ENCODE measurements at regions of chr18 and their contacts with region 1.

Region 1: DNA sequence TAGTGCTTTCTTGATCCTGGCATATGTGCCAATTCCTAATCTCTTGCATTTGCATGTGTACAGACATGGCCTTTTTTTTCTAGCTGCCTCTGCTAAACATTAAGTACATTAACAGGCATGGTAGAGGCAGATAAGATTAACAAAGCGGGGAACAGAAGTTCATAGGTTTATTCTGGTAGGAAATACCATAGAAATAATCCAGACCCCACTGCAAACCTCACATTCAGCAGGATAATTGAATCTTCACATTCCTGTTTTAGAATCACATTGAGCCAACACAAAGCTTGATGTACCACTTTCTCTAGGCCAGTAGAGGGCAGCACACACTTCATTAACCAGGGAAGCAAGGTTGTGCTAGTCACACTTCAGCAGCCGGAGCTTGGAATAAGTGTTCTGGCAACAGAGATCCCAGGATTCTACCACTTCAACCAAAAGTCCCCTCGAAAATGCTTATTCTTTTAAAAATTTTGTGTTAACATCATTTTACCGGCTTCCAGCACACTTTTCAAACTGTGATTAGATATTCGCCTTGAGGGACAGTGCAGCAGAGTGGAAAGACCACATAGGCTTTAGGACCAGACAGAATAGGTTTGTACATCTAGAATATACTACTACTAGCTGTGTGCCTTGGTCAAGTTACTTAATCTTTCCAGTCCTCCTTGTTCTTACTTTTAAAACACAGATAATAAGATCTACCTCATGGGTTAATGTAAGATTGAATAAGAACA is 420.2 kb upstream of the CHST9 start:
- DNase-seq: no peak
- ATAC-seq: peak; percentile 90
- H3K4me3 ChIP-seq: no peak overlapping the region
- H3K27ac ChIP-seq: no peak overlapping the region
- H3K4me1 ChIP-seq: no peaks in the 10 kb centered on the region
- H3K27me3 ChIP-seq: no peaks in the 10 kb centered on the region
- CTCF ChIP-seq: peak; percentile 77 to 86 (median 83)
- EP300 ChIP-seq: no peak
- POLR2A ChIP-seq: no peak
- RAD21 ChIP-seq: peak; percentile 76

Region 2: DNA sequence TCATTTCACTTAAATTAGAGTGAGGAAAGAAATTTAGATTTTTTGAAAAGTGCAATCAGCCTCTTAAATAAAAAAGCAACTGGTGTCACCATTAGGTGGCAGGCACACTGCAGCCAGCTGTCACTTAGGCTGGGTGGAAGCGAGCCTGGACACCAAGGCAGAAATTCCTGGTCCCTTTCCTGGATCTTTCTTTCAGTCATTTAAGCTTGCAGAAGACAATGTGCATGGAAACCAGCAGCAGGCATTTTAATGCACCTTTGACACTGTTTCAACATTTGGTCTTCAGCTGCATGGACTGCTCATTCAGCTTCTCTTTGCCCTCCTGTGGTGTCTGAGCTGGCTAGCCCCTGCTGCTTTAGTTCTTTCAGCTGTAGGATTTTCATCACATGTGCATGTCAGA is 800.8 kb before region 1 on chr18:
- CTCF ChIA-PET with region 1: interaction called, 5 read pairs
- POLR2A ChIA-PET with region 1: no interaction called
- RAD21 ChIA-PET with region 1: no interaction called
- SMC1A ChIA-PET with region 1: no interaction called
- in situ Hi-C with region 1: loop called (anchors 10 kb)
- intact Hi-C with region 1: no loop called
- DNase-seq: no peak
- ATAC-seq: no peak
- H3K4me3 ChIP-seq: no peak overlapping the region
- H3K27ac ChIP-seq: no peak overlapping the region
- H3K4me1 ChIP-seq: no peaks in the 10 kb centered on the region
- H3K27me3 ChIP-seq: no peaks in the 10 kb centered on the region
- CTCF ChIP-seq: peak; percentile 21 to 41 (median 33); a peak in 4 of 6 replicates
- EP300 ChIP-seq: no peak
- POLR2A ChIP-seq: no peak
- RAD21 ChIP-seq: peak; percentile 55

Region 3: DNA sequence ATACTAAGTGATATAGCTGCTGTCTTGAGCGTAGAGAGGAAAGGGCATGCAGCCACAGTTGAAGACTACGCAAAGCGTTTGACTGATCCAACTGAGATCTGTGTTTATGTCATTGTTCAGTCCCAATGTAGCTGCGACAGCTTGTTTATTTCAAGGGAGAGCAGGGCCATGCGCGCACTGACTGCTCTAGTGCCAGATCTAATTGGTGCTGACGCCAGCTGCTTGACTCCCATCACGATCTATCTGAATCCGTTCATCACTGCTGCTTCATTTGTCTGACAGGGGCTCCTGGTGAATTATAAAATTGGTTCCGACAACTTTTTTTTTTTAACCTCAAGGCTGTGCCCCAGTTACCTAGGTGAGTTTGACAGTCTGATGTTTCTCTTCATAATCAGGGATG is 495.8 kb before region 1 on chr18:
- CTCF ChIA-PET with region 1: no interaction called
- POLR2A ChIA-PET with region 1: no interaction called
- RAD21 ChIA-PET with region 1: no interaction called
- SMC1A ChIA-PET with region 1: no interaction called
- in situ Hi-C with region 1: no loop called
- intact Hi-C with region 1: no loop called
- DNase-seq: no peak
- ATAC-seq: no peak
- H3K4me3 ChIP-seq: no peak overlapping the region
- H3K27ac ChIP-seq: no peak overlapping the region
- H3K4me1 ChIP-seq: no peaks in the 10 kb centered on the region
- H3K27me3 ChIP-seq: no peaks in the 10 kb centered on the region
- CTCF ChIP-seq: no peak
- EP300 ChIP-seq: no peak
- POLR2A ChIP-seq: no peak
- RAD21 ChIP-seq: no peak

Region 4: DNA sequence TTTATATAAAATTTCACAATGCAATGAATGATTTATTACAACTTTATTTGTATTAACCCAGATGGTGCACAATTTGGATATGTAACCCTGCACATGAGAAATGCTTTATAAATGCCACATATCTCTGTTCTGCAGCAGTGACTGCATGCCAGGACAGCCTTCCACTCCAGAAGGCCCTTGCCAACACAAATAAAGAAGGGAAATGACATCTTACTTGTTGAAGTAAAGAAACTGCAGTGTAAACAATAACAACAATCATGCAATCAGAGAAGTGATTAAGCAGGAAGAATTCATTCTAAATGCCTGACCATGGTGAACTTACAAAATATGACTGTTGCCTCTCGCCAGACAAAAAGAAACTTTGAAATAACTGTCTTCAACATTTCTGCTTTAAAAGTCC is 290.3 kb before region 1 on chr18:
- CTCF ChIA-PET with region 1: no interaction called
- POLR2A ChIA-PET with region 1: no interaction called
- RAD21 ChIA-PET with region 1: no interaction called
- SMC1A ChIA-PET with region 1: no interaction called
- in situ Hi-C with region 1: no loop called
- intact Hi-C with region 1: no loop called
- DNase-seq: no peak
- ATAC-seq: no peak
- H3K4me3 ChIP-seq: no peak overlapping the region
- H3K27ac ChIP-seq: no peak overlapping the region
- H3K4me1 ChIP-seq: no peaks in the 10 kb centered on the region
- H3K27me3 ChIP-seq: no peaks in the 10 kb centered on the region
- CTCF ChIP-seq: no peak
- EP300 ChIP-seq: no peak
- POLR2A ChIP-seq: no peak
- RAD21 ChIP-seq: no peak

Region 5: GRCh38 chr18:27363872-27364271 is 241.4 kb before region 1 on chr18:
- CTCF ChIA-PET with region 1: interaction called, 23 read pairs
- POLR2A ChIA-PET with region 1: no interaction called
- RAD21 ChIA-PET with region 1: interaction called, 27 read pairs
- SMC1A ChIA-PET with region 1: interaction called, 4 read pairs
- in situ Hi-C with region 1: loop called (anchors 10 kb)
- intact Hi-C with region 1: no loop called
- DNase-seq: no peak
- ATAC-seq: peak; percentile 58; the same call in 2 of the 3 replicates
- H3K4me3 ChIP-seq: no peak overlapping the region
- H3K27ac ChIP-seq: no peak overlapping the region
- H3K4me1 ChIP-seq: no peaks in the 10 kb centered on the region
- H3K27me3 ChIP-seq: no peaks in the 10 kb centered on the region
- CTCF ChIP-seq: peak in 2 of 3 experiments; percentile 10 to 11; a peak in 1 of 6 replicates
- EP300 ChIP-seq: no peak
- POLR2A ChIP-seq: no peak
- RAD21 ChIP-seq: peak; percentile 43; the same call in 1 of the 2 replicates

Region 6: GRCh38 chr18:27616324-27616723 is 11.1 kb after region 1 on chr18:
- CTCF ChIA-PET with region 1: interaction called, 11 read pairs
- POLR2A ChIA-PET with region 1: no interaction called
- RAD21 ChIA-PET with region 1: no interaction called
- SMC1A ChIA-PET with region 1: no interaction called
- in situ Hi-C with region 1: no loop called
- intact Hi-C with region 1: no loop called
- DNase-seq: no peak
- ATAC-seq: no peak
- H3K4me3 ChIP-seq: no peak overlapping the region
- H3K27ac ChIP-seq: no peak overlapping the region
- H3K4me1 ChIP-seq: no peaks in the 10 kb centered on the region
- H3K27me3 ChIP-seq: no peaks in the 10 kb centered on the region
- CTCF ChIP-seq: no peak
- EP300 ChIP-seq: no peak
- POLR2A ChIP-seq: no peak
- RAD21 ChIP-seq: no peak

Region 7: DNA sequence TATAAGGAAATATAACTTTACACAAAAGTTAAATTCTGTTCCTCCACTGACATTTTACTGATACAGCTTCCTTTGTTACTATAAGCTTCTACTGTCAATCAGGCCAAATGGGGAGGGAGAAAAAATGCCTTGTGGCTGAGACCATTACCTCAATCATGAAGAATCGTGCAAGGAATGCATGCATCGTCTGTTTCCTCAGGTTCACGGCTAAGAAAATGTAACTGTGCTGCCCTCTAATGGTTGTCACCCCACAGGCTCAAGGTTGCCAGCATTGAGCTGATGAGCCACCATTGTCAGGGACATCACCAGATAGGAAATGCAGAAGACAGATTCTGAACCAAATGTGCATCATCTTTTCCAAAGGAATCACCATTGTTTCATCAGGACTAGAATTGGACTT is 144.7 kb after region 1 on chr18:
- CTCF ChIA-PET with region 1: interaction called, 84 read pairs
- POLR2A ChIA-PET with region 1: no interaction called
- RAD21 ChIA-PET with region 1: interaction called, 35 read pairs
- SMC1A ChIA-PET with region 1: interaction called, 34 read pairs
- in situ Hi-C with region 1: no loop called
- intact Hi-C with region 1: no loop called
- DNase-seq: no peak
- ATAC-seq: peak; percentile 88
- H3K4me3 ChIP-seq: no peak overlapping the region
- H3K27ac ChIP-seq: no peak overlapping the region
- H3K4me1 ChIP-seq: no peaks in the 10 kb centered on the region
- H3K27me3 ChIP-seq: no peaks in the 10 kb centered on the region
- CTCF ChIP-seq: peak; percentile 24 to 58 (median 38); a peak in 4 of 6 replicates
- EP300 ChIP-seq: no peak
- POLR2A ChIP-seq: no peak
- RAD21 ChIP-seq: peak; percentile 38; the same call in 1 of the 2 replicates